ENCODE measurements at regions of chr1 and their contacts with region 1.

Region 1: GRCh38 chr1:172488393-172488792 is 44.5 kb upstream of the PIGC start:
- DNase-seq: no peak
- ATAC-seq: no peak
- H3K4me3 ChIP-seq: no peak overlapping the region
- H3K4me3 Mint-ChIP-seq: no peak overlapping the region
- H3K27ac ChIP-seq: no peak overlapping the region
- H3K27ac Mint-ChIP-seq: no peak overlapping the region
- H3K4me1 ChIP-seq: peaks cover 0 to 3% of the 10 kb centered on the region in 2 experiments
- H3K4me1 Mint-ChIP-seq: peaks cover 10 to 16% (median 16%) of the 10 kb centered on the region in 3 donors
- H3K27me3 ChIP-seq: no peaks in the 10 kb centered on the region
- H3K27me3 Mint-ChIP-seq: peaks cover 3 to 12% of the 10 kb centered on the region in 2 donors

Region 2: DNA sequence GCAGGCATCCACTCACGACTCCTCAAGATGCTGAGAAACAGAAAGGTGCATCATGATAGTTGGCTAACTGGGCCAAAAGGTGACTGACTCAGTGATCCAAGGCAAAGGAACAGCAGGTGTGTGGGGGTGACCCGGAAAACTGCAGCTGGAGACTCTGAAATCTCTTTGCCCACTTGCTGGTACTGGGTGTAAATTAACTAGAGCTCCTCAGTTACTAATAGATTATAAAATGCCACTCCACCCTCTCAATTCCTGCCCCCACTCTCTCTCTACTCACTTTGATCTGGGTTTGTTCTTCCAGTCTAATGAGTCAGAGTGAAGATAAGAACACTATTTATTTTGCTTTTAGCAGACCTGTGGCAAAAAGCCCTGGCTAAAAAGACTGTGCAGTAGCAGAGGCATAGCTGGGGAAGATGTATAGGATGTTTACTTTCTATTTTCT is 37.4 kb before region 1 on chr1:
- CTCF ChIA-PET with region 1: interaction called in 1 of 2 experiments, 10 read pairs
- POLR2A ChIA-PET with region 1: no interaction called
- DNase-seq: no peak
- ATAC-seq: peak in 3 of 4 experiments; percentile 39 to 66 (median 39)
- H3K4me3 ChIP-seq: no peak overlapping the region
- H3K4me3 Mint-ChIP-seq: peak overlapping the region in 1 of 3 donors; percentile 1
- H3K27ac ChIP-seq: no peak overlapping the region
- H3K27ac Mint-ChIP-seq: peak overlapping the region in 1 of 2 donors; percentile 3
- H3K4me1 ChIP-seq: peaks cover 10 to 11% of the 10 kb centered on the region in 2 experiments
- H3K4me1 Mint-ChIP-seq: peaks cover 18 to 23% (median 21%) of the 10 kb centered on the region in 3 donors
- H3K27me3 ChIP-seq: peaks cover 0 to under 1% of the 10 kb centered on the region in 2 experiments
- H3K27me3 Mint-ChIP-seq: no peaks in the 10 kb centered on the region

Measured in T-cell (primary cell).